ENCODE measurements at regions of chr11 and their contacts with region 1.

Region 1: GRCh38 chr11:12052676-12053605 is 44.5 kb upstream of the DKK3 start:
- DNase-seq: no peak
- ATAC-seq: no peak; the same call in 2 of the 3 replicates
- H3K4me3 ChIP-seq: no peak overlapping the region
- H3K27ac ChIP-seq: no peak overlapping the region
- H3K4me1 ChIP-seq: no peaks in the 10 kb centered on the region
- H3K27me3 ChIP-seq: no peaks in the 10 kb centered on the region
- CTCF ChIP-seq: peak in 1 of 3 experiments; percentile 21; a peak in 1 of 6 replicates
- EP300 ChIP-seq: no peak
- POLR2A ChIP-seq: no peak
- RAD21 ChIP-seq: 0 out of 2 replicates have a peak, but pooled peaks have one; percentile 17

Region 2: DNA sequence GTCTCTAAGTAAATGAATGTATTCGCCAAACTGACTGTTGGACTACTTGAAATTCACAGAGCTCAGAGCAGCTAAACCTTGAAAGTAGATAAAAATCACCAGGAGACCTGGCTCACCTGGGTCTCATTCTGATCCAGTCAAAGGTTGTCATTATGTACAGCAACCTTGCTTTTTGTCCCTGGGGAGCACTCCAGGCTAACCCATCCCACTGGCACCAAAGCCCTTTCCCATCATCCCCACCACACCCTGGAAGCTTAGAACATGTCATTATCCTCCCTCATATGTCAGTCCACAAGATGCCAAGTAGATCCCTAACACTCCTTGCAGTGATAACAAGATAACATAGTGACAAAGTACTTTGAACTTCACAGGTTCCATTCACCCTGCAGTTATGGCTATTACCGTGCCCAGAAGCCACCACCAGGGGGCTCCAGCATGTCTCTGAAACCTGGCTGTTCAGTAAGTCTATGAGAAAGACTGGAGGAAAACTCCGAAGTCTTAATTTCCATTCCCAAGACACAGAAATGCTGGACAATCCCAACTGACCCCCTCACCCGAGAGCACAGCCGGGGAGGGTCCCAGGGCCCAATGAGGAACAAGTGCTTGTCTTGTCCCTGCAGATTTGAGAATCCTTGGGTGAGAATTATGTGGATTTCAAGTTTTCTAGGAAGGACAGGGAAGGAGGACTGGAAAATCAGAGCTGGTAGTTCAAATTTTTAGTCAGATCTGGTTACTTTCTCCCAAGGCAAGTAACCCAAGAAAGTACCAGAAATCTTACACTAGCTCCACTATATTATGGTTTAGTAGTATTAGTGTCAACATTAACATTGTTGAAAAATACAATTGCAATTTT is 254.1 kb before region 1 on chr11:
- CTCF ChIA-PET with region 1: interaction called, 3 read pairs
- POLR2A ChIA-PET with region 1: no interaction called
- RAD21 ChIA-PET with region 1: no interaction called
- SMC1A ChIA-PET with region 1: no interaction called
- in situ Hi-C with region 1: loop called (anchors 5 kb)
- intact Hi-C with region 1: no loop called
- DNase-seq: no peak
- ATAC-seq: peak; percentile 89
- H3K4me3 ChIP-seq: no peak overlapping the region
- H3K27ac ChIP-seq: no peak overlapping the region
- H3K4me1 ChIP-seq: no peaks in the 10 kb centered on the region
- H3K27me3 ChIP-seq: peaks cover 0 to 3% of the 10 kb centered on the region in 2 experiments; a peak in 1 of 4 replicates
- CTCF ChIP-seq: peak; percentile 63 to 69 (median 65)
- EP300 ChIP-seq: no peak
- POLR2A ChIP-seq: no peak
- RAD21 ChIP-seq: peak; percentile 75

Region 3: GRCh38 chr11:12200279-12201010 is 147.5 kb after region 1 on chr11:
- CTCF ChIA-PET with region 1: interaction called, 7 read pairs
- POLR2A ChIA-PET with region 1: no interaction called
- RAD21 ChIA-PET with region 1: interaction called, 4 read pairs
- SMC1A ChIA-PET with region 1: interaction called, 10 read pairs
- in situ Hi-C with region 1: no loop called
- intact Hi-C with region 1: no loop called
- DNase-seq: no peak
- ATAC-seq: no peak
- H3K4me3 ChIP-seq: no peak overlapping the region
- H3K27ac ChIP-seq: no peak overlapping the region
- H3K4me1 ChIP-seq: peaks cover 23% of the 10 kb centered on the region
- H3K27me3 ChIP-seq: no peaks in the 10 kb centered on the region
- CTCF ChIP-seq: no peak
- EP300 ChIP-seq: no peak
- POLR2A ChIP-seq: no peak
- RAD21 ChIP-seq: no peak

Region 4: DNA sequence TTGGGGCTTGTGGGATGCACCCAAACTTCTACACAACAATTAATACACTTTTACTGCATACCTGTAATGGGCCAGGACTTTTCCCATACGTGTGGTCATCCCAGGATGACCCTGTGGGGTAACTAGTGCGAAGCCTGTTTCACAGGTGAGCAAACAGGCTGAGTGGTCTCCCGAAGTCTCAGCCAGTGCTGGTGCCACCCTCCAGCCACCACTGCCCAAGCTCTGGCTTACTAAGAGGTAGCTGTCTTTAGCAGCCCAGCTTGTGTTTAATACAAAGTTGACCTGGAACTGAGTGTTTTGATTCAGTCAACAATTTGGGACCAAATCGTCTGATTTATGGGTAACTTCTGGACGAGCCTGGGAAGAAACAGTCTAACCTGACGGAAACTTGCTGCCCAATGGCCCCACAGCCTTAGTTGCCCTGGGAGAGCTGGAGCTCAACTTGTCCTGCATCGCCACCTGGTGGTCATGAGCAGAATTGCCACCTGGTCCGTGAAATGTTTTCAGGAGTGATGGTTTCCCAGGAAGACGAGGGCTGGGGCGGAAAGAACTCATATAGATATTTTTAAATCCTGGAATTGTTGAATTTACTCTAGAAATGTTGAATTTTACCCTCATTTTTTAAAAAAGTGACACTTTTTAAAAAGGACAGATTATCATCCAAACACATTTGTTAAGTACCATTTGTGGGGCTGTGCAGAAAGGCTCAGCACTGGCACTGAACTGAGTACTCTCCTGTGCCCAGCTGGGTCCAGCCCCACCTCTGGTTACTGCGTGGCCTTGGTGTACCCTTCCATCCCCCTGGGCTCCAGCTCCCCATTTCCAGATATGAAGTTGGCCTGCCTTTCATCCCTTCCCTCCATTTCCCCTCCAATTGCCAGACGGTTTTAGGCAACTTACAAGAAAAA is 228.9 kb after region 1 on chr11:
- CTCF ChIA-PET with region 1: interaction called, 214 read pairs
- POLR2A ChIA-PET with region 1: no interaction called
- RAD21 ChIA-PET with region 1: interaction called, 59 read pairs
- SMC1A ChIA-PET with region 1: interaction called, 43 read pairs
- in situ Hi-C with region 1: loop called (anchors 5 kb)
- intact Hi-C with region 1: no loop called
- DNase-seq: peak; percentile 21
- ATAC-seq: peak; percentile 89
- H3K4me3 ChIP-seq: no peak overlapping the region
- H3K27ac ChIP-seq: no peak overlapping the region
- H3K4me1 ChIP-seq: no peaks in the 10 kb centered on the region
- H3K27me3 ChIP-seq: no peaks in the 10 kb centered on the region; a peak in 1 of 4 replicates
- CTCF ChIP-seq: peak; percentile 87 to 95 (median 93)
- EP300 ChIP-seq: no peak
- POLR2A ChIP-seq: no peak
- RAD21 ChIP-seq: peak; percentile 100

Region 5: DNA sequence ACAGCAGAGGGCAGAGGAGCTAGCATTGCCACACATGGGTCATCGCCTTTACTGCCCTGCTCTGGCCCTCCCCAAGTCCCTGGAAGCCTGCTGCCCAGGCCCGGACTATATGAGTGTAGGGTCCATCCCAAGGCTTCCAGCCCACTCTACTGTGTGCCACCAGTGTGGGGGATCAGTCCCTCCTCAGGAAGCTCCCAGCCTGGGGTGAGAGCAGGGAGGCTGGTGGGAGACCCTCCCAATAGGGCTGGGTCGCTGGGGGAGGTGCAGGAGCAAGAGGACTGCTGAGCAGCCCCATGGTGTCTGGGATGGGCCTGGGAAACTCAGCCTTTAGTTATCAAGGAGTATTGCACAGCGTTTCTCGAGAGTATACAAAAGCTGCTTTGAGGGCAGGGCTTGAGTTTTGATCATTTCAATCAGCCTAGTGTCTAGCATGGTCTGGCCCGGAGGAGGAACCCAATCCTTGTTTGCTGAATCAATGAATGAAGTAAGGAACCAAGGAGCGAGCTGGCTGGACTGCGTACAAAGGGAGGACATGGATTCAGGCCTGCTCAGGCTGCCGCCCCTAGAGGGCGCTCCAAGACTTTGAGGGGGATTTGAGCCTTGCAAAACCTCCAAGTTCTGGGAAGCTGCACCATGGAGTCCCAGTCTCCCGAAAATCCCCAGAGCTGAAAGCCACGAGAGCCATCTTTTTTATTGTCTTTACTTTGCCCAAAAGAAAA is 235.4 kb after region 1 on chr11:
- CTCF ChIA-PET with region 1: interaction called, 214 read pairs
- POLR2A ChIA-PET with region 1: no interaction called
- RAD21 ChIA-PET with region 1: interaction called, 59 read pairs
- SMC1A ChIA-PET with region 1: interaction called, 23 read pairs
- in situ Hi-C with region 1: loop called (anchors 5 kb)
- intact Hi-C with region 1: no loop called
- DNase-seq: no peak
- ATAC-seq: peak; percentile 79
- H3K4me3 ChIP-seq: no peak overlapping the region
- H3K27ac ChIP-seq: no peak overlapping the region
- H3K4me1 ChIP-seq: no peaks in the 10 kb centered on the region
- H3K27me3 ChIP-seq: no peaks in the 10 kb centered on the region
- CTCF ChIP-seq: peak; percentile 68 to 93 (median 88)
- EP300 ChIP-seq: no peak
- POLR2A ChIP-seq: no peak
- RAD21 ChIP-seq: peak; percentile 65

Region 6: GRCh38 chr11:12893787-12894672 is 841.1 kb after region 1 on chr11:
- CTCF ChIA-PET with region 1: no interaction called
- POLR2A ChIA-PET with region 1: no interaction called
- RAD21 ChIA-PET with region 1: no interaction called
- SMC1A ChIA-PET with region 1: no interaction called
- in situ Hi-C with region 1: no loop called
- intact Hi-C with region 1: loop called (anchors 5 kb)
- DNase-seq: no peak
- ATAC-seq: peak; percentile 80
- H3K4me3 ChIP-seq: no peak overlapping the region
- H3K27ac ChIP-seq: no peak overlapping the region
- H3K4me1 ChIP-seq: no peaks in the 10 kb centered on the region
- H3K27me3 ChIP-seq: no peaks in the 10 kb centered on the region; a peak in 2 of 4 replicates
- CTCF ChIP-seq: peak; percentile 51 to 70 (median 70)
- EP300 ChIP-seq: no peak
- POLR2A ChIP-seq: no peak
- RAD21 ChIP-seq: peak; percentile 62

Measured in GM12878 (cell line).